ENCODE measurements at regions of chr22 and their contacts with region 1.

Region 1: DNA sequence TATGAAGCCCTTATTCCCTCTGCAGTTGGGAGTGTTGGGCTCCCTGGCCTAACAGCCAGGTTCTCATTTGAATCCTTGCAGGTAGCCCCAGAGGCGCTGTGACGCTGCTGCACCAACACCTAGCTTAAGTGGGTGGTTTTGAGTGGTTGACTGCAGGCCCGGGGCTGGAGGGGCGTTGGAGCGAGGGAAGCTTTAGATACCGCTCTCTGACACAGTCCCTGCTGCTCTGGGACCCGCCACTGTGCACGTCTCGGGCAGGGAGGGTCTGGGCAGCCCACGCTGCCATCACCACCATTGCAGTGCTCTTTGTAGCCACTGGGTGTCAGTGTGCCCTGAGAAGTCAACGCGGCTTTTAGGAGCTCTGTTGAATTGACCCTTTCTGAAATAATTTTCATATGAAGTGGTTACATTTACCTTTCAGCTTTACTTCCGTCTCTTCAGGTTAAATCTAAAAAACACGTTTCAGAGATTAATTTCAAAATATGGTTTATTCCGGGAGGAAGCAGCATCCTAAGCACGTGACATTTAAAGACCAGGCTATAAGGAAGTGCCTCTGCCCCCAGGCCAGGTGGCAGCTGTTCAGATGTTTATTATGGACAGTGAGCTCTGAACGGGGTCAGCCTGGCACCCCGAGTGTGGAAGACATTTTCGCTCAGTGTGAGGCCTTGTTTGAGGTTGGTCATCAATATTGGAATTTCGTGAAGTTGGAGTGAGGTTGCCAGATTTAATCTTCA is 30.9 kb upstream of the PARVB start:
- DNase-seq: peak; percentile 58
- ATAC-seq: peak; percentile 75 to 76

Region 2: GRCh38 chr22:43753688-43754087 is 239.5 kb before region 1 on chr22:
- intact Hi-C with region 1: no loop called
- DNase-seq: no peak
- ATAC-seq: no peak

Region 3: GRCh38 chr22:44625981-44626687 is 632.9 kb after region 1 on chr22:
- intact Hi-C with region 1: loop called (anchors 1 to 5 kb)
- DNase-seq: peak; percentile 75
- ATAC-seq: peak; percentile 75 to 81